Common myeloid progenitor, CD34-positive (primary cell): ENCODE measurements at regions of chr17 and their contacts with region 1.

Region 1: DNA sequence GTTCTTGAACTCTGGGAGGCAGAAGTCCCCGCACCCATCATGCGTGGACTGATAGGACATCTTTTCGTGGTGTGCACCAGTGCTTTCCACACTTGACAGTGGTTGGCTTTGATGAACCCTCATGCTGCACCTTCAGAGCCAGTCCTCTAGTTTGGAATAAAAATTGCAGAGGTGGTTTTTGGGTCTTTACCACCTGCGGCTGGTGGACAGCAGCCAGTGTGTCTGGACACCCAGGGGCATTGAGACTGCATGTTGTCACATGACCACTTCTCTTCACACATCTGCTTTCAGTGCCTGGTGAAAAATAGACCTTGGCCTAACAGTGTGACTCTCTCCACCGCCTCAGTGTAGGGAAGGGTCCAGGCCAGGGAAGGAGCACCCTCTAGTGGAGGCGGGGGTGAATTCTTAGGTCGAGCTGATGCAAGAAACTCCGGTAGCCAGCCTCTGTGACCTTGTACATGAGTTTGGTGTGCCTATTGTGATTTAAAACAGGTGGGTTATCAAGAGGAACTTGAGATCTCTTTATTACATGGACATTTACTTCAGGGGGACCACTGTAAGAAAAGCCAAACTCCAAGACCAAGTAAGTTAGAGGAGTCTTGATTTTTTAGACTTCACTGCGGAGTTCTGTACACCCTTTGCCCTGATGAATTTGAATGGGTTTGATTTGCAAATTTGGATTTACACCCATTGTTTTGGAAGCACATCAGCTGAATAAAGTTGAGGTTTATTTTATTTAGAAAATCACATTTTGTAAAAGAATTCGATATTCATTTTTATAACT is 17.9 kb downstream of the GOSR2 start:
- DNase-seq: peak; percentile 69 to 86 (median 82)
- H3K4me3 ChIP-seq: no peak overlapping the region
- H3K27ac ChIP-seq: no peak overlapping the region
- H3K4me1 ChIP-seq: peaks cover 0 to 35% (median 21%) of the 10 kb centered on the region in 4 experiments
- H3K27me3 ChIP-seq: no peaks in the 10 kb centered on the region

Region 2: DNA sequence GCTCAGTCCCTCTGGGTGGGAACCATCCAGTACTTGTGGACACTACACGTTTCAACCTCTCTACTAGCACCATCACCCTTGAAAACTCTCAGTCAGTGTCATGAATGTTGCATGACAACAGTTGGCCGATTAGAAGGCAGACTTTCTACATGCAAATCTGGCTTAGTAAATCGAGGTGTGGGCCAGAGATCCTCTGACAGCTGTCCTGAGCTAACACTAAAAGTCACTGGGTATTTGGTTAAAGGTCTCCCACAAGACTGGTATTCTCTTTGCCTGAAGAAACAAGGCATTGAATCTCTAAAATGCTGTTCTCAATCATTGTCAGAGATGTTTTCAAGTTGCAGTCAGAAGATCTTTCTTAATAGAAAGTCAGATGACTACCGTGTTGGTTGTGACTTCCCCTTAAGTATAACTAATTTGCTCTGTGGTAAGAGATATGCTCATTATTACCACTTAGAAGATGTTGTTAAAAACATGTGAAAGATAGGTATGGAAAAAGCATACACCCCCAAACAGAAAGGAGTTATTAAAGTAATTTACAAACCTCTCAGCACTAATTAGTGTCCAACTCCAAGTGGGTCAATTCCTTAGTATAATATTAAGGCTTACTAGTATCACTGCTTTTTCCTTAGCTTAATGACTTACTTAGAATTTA is 184.6 kb before region 1 on chr17:
- CTCF ChIA-PET with region 1: no interaction called
- POLR2A ChIA-PET with region 1: no interaction called
- DNase-seq: no peak
- H3K4me3 ChIP-seq: no peak overlapping the region
- H3K27ac ChIP-seq: no peak overlapping the region
- H3K4me1 ChIP-seq: no peaks in the 10 kb centered on the region
- H3K27me3 ChIP-seq: no peaks in the 10 kb centered on the region

Region 3: GRCh38 chr17:46841561-46842379 is 99.0 kb before region 1 on chr17:
- CTCF ChIA-PET with region 1: interaction called, 41 read pairs
- POLR2A ChIA-PET with region 1: no interaction called
- DNase-seq: peak in 2 of 3 donors; percentile 40 to 46
- H3K4me3 ChIP-seq: peak overlapping the region in 2 of 7 experiments; percentile 33 to 50
- H3K27ac ChIP-seq: no peak overlapping the region
- H3K4me1 ChIP-seq: peaks cover 0 to 10% (median 3%) of the 10 kb centered on the region in 4 experiments
- H3K27me3 ChIP-seq: peaks cover 3 to 15% (median 7%) of the 10 kb centered on the region in 5 experiments

Region 4: GRCh38 chr17:46962374-46962790 is 21.6 kb after region 1 on chr17:
- CTCF ChIA-PET with region 1: interaction called, 11 read pairs
- POLR2A ChIA-PET with region 1: no interaction called
- DNase-seq: no peak
- H3K4me3 ChIP-seq: no peak overlapping the region
- H3K27ac ChIP-seq: no peak overlapping the region
- H3K4me1 ChIP-seq: peaks cover 0 to 12% (median 2%) of the 10 kb centered on the region in 4 experiments
- H3K27me3 ChIP-seq: peaks cover 0 to 4% (median 0%) of the 10 kb centered on the region in 5 experiments

Region 5: GRCh38 chr17:46995841-46996571 is 55.2 kb after region 1 on chr17:
- CTCF ChIA-PET with region 1: interaction called, 20 read pairs
- POLR2A ChIA-PET with region 1: no interaction called
- DNase-seq: no peak
- H3K4me3 ChIP-seq: no peak overlapping the region
- H3K27ac ChIP-seq: no peak overlapping the region
- H3K4me1 ChIP-seq: peaks cover 0 to 3% (median 0%) of the 10 kb centered on the region in 4 experiments
- H3K27me3 ChIP-seq: no peaks in the 10 kb centered on the region